Activated CD4-positive, alpha-beta T cell treated with anti-CD3 and anti-CD28 coated beads for 36 hours (primary cell): ENCODE measurements at regions of chr1 and their contacts with region 1.

Region 1: GRCh38 chr1:41573785-41574713 is 89.6 kb upstream of the EDN2 start:
- DNase-seq: peak; percentile 90
- ATAC-seq: peak; percentile 93
- H3K4me3 Mint-ChIP-seq: no peak overlapping the region
- H3K27ac Mint-ChIP-seq: peak overlapping the region; percentile 17
- H3K4me1 Mint-ChIP-seq: peaks cover 41% of the 10 kb centered on the region
- H3K27me3 Mint-ChIP-seq: no peaks in the 10 kb centered on the region

Region 2: DNA sequence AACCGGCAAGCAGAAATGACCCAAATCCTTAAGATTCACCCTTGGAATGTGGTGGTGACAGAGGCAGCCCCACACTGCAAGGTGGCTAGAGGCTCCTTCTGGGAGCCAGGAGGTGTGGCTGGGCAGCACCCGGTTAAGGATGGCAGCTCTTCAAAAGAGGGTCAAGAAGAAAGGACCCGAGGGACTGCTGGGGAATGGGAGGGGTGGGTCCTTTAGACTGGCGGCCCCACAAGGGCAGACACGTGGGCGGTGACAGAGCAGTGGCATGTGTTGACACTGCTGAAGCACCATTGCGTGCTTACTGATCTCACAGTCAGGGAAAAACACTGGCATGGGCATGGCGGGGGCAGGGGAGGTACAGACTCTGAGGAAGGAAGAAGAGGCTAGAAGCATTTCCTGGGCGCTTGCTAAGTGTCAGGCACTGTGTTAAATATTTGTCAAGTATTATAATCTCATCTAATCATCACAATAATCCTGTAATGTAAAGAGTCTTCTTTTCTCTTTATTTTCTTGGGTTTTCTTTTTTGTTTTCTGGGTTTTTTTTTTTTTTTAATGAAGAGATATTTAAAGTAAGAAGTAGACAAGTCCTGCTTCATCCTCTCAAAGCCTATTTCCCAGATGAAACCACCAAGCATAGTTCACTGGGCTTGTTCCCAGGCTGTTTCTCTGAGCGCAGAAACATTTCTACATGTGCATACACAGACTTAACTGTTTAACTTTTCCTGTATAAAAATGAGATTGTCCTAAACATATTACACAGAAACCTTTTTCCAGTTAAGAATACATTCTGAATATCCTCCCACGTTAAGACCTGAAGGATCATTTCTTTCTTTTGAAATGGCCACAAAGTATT is 76.2 kb after region 1 on chr1:
- CTCF ChIA-PET with region 1: interaction called, 4 read pairs
- POLR2A ChIA-PET with region 1: no interaction called
- intact Hi-C with region 1: loop called in 1 of 2 experiments (anchors 10 kb)
- DNase-seq: peak; percentile 73
- ATAC-seq: peak; percentile 72
- H3K4me3 Mint-ChIP-seq: peak overlapping the region; percentile 11
- H3K27ac Mint-ChIP-seq: peak overlapping the region; percentile 85
- H3K4me1 Mint-ChIP-seq: peaks cover 79% of the 10 kb centered on the region
- H3K27me3 Mint-ChIP-seq: no peaks in the 10 kb centered on the region

Region 3: DNA sequence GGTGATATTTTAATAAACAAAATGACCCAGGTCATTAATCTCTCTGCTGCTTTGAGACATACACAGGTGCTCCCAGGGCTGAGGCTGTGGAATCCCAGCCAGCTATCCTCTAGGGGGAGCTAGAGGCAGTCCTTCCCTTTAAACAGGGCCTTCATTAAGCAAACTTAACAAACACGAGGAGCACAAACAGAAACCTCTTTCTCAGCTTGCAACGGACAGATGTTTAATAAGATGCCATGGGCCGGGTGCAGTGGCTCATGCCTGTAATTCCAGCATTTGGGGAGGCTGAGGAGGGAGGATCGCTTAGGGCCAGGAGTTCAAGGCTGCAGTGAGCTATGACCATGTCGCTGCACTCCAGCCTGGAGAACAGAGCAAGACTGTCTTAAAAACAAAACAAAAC is 238.0 kb after region 1 on chr1:
- CTCF ChIA-PET with region 1: interaction called, 6 read pairs
- POLR2A ChIA-PET with region 1: no interaction called
- intact Hi-C with region 1: loop called (anchors 1 to 5 kb)
- DNase-seq: peak; percentile 78
- ATAC-seq: peak; percentile 68
- H3K4me3 Mint-ChIP-seq: no peak overlapping the region
- H3K27ac Mint-ChIP-seq: no peak overlapping the region
- H3K4me1 Mint-ChIP-seq: peaks cover 49% of the 10 kb centered on the region
- H3K27me3 Mint-ChIP-seq: no peaks in the 10 kb centered on the region

Region 4: GRCh38 chr1:41868599-41868998 is 294.6 kb after region 1 on chr1:
- CTCF ChIA-PET with region 1: interaction called, 4 read pairs
- POLR2A ChIA-PET with region 1: no interaction called
- intact Hi-C with region 1: loop called (anchors 1 to 2 kb)
- DNase-seq: peak; percentile 61
- ATAC-seq: peak; percentile 85
- H3K4me3 Mint-ChIP-seq: no peak overlapping the region
- H3K27ac Mint-ChIP-seq: no peak overlapping the region
- H3K4me1 Mint-ChIP-seq: peaks cover 32% of the 10 kb centered on the region
- H3K27me3 Mint-ChIP-seq: no peaks in the 10 kb centered on the region

Region 5: DNA sequence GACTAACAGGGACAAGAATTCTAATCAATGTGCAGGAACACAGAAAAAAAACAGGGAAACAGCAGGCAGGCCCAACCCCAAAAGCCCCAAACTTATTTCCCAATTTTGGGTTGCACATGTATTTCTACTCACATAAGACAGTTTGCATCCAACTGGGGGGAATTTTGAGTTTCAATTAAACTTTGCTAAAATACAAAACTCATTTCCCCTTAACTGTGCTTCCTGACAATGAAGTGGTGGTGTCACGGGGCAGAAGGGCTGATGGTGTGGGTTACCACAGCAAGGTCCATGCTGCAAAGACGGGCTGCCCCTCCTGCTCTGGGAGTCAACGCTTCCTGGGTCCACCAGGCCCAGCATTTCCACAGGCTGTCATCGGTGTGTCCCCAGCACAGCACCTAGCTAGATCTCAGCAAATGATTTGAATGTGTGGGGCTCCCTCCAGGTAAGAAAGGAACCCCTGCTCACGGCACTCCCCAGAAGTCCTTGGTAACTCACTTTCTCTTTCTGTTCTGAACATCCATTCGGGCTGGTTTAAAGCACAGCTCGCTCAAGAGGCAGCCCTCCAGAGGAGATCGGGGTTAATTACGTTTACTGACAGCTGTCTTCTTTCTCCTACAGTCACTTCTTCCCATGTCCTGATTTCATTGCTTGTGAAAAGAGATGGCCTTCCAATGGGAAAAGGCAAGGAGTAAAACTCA is 317.3 kb after region 1 on chr1:
- CTCF ChIA-PET with region 1: interaction called, 11 read pairs
- POLR2A ChIA-PET with region 1: interaction called, 4 read pairs
- intact Hi-C with region 1: loop called in 1 of 2 experiments (anchors 1 kb)
- DNase-seq: peak; percentile 72
- ATAC-seq: peak; percentile 96
- H3K4me3 Mint-ChIP-seq: peak overlapping the region; percentile 78
- H3K27ac Mint-ChIP-seq: peak overlapping the region; percentile 95
- H3K4me1 Mint-ChIP-seq: peaks cover 50% of the 10 kb centered on the region
- H3K27me3 Mint-ChIP-seq: no peaks in the 10 kb centered on the region

Region 6: GRCh38 chr1:41939194-41939593 is 365.1 kb after region 1 on chr1:
- CTCF ChIA-PET with region 1: no interaction called
- POLR2A ChIA-PET with region 1: no interaction called
- intact Hi-C with region 1: no loop called
- DNase-seq: no peak
- ATAC-seq: no peak
- H3K4me3 Mint-ChIP-seq: no peak overlapping the region
- H3K27ac Mint-ChIP-seq: no peak overlapping the region
- H3K4me1 Mint-ChIP-seq: peaks cover 14% of the 10 kb centered on the region
- H3K27me3 Mint-ChIP-seq: no peaks in the 10 kb centered on the region

Region 7: GRCh38 chr1:42157667-42158066 is 583.6 kb after region 1 on chr1:
- CTCF ChIA-PET with region 1: no interaction called
- POLR2A ChIA-PET with region 1: no interaction called
- intact Hi-C with region 1: loop called in 1 of 2 experiments (anchors 5 kb)
- DNase-seq: peak; percentile 38
- ATAC-seq: peak; percentile 66
- H3K4me3 Mint-ChIP-seq: no peak overlapping the region
- H3K27ac Mint-ChIP-seq: no peak overlapping the region
- H3K4me1 Mint-ChIP-seq: peaks cover 4% of the 10 kb centered on the region
- H3K27me3 Mint-ChIP-seq: peaks cover 2% of the 10 kb centered on the region